ENCODE measurements at regions of chr6 and their contacts with region 1.

Region 1: DNA sequence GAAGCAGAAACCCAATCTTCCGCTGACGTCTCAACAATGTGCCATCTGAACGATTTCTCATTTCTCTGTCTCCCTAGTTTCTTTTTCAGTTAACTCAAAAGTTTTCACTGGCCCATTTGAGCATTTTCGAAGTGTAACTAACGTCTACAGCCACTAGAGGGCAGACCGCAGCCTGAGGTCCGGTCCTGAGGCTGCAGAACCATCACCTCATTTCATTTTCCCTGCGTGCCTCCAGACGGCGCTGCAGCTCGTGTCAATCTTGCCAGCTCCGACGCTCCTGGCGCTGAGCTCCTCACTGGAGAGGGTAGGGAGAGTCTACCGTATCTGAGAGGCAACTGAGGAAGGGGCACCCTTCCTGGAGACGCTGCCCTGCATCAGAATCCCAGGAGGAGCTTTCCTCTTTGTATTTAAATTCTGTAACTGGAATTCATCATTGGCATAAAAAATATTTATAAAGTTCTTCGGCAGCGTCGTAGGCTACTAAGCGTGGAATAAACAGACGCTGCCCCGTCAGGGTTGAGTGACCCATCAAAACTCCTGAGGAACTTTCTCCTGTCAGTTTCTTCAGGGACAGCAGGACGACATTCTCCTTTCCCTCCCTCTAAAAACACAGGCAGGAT is 28.5 kb upstream of the DTNBP1 start:
- DNase-seq: peak; percentile 71
- H3K4me3 ChIP-seq: peak overlapping the region; percentile 50
- H3K27ac ChIP-seq: no peak overlapping the region
- H3K27me3 ChIP-seq: peaks cover 6% of the 10 kb centered on the region
- CTCF ChIP-seq: peak; percentile 100

Region 2: DNA sequence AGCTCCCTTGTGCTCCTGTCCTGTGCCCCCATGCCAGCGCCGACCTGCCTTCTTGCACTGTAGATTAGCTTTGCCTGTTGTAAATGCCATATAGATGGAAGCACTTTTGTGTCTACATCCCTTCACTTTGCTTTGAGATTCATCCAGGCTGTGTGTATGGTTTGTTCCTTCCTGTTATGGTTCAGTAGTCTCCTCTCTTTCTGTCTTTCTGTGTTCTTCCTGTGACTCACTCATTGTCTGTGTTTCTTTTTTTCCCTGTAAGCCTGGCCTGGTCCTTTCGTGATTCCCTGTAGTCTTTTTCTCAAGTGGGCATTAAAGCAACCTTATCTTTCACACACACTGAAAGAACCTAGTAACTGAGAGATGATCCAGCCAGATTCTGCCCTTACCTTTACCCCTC is 378.9 kb before region 1 on chr6:
- CTCF ChIA-PET with region 1: no interaction called
- POLR2A ChIA-PET with region 1: no interaction called
- DNase-seq: no peak
- H3K4me3 ChIP-seq: no peak overlapping the region
- H3K27ac ChIP-seq: no peak overlapping the region
- H3K27me3 ChIP-seq: no peaks in the 10 kb centered on the region
- CTCF ChIP-seq: no peak

Region 3: DNA sequence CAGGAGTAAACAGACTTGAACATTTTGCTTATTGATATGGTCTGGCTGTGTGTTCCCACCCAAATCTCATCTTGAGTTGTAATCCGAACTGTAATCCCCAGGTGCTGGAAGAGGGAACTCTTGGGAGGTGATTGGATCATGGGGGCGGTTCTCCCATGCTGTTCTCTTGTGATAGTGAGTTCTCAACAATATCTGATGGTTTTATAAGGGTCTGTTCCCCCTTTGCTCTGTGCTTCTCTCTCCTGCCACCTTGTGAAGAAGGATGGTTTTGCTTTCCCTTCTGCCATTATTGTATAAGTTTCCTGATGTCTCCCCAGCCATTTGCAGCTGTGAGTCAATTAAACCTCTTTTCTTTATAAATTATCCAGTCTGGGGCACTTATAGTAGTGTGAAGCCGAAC is 477.5 kb after region 1 on chr6:
- CTCF ChIA-PET with region 1: interaction called, 13 read pairs
- POLR2A ChIA-PET with region 1: no interaction called
- DNase-seq: no peak
- H3K4me3 ChIP-seq: no peak overlapping the region
- H3K27ac ChIP-seq: no peak overlapping the region
- H3K27me3 ChIP-seq: peaks cover 34% of the 10 kb centered on the region
- CTCF ChIP-seq: peak; percentile 73

Region 4: GRCh38 chr6:16190214-16190613 is 498.9 kb after region 1 on chr6:
- CTCF ChIA-PET with region 1: interaction called, 11 read pairs
- POLR2A ChIA-PET with region 1: no interaction called
- DNase-seq: no peak
- H3K4me3 ChIP-seq: no peak overlapping the region
- H3K27ac ChIP-seq: no peak overlapping the region
- H3K27me3 ChIP-seq: peaks cover 34% of the 10 kb centered on the region
- CTCF ChIP-seq: no peak

Region 5: GRCh38 chr6:16206595-16207037 is 515.3 kb after region 1 on chr6:
- CTCF ChIA-PET with region 1: interaction called, 143 read pairs
- POLR2A ChIA-PET with region 1: no interaction called
- DNase-seq: peak; percentile 55
- H3K4me3 ChIP-seq: no peak overlapping the region
- H3K27ac ChIP-seq: no peak overlapping the region
- H3K27me3 ChIP-seq: no peaks in the 10 kb centered on the region
- CTCF ChIP-seq: peak; percentile 96